Right ventricle myocardium inferior (tissue), 1 donor: ENCODE measurements at regions of chr9 and their contacts with region 1.

Region 1: GRCh38 chr9:131432597-131433306 is 38.9 kb downstream of the PRRC2B start:
- DNase-seq: no peak
- ATAC-seq: peak; percentile 15

Region 2: GRCh38 chr9:131393622-131394463 is 38.9 kb before region 1 on chr9 and contains the start of gene PRRC2B:
- intact Hi-C with region 1: loop called (anchors 5 kb)
- DNase-seq: peak; percentile 94
- ATAC-seq: peak; percentile 85
- total RNA-seq, gene PRRC2B: 142 TPM

Region 3: DNA sequence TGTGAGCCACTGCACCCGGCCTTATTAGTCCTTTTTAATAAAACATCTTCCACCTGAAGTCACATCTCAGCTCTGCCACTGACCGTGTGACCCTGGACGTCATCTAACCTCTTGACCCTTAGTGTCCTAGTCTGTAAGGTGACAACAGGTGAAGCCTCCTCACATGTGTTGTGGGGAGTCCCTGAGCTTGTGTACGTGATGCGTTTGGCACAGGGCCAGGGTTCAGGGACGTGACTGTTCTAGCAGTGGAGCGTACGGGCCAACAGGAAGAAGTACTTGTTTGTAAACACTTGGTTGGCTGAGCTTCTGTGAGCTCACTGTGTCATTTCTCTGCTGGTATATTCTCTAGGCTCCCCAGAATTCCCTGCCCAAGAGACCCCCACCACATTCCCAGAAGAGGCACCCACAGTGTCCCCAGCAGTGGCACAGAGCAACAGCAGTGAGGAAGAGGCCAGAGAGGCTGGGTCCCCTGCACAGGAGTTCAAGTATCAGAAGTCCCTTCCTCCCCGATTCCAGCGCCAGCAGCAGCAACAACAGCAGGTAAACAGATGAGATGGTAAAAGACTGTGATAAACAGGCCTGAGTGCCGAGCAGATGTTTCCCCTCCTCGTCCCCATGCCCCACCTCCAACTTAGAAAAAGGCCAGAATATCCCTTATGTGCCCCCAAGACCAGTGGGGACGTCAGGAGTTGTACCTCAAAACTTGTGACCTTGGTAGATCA is 34.6 kb after region 1 on chr9:
- intact Hi-C with region 1: loop called (anchors 5 kb)
- DNase-seq: no peak
- ATAC-seq: no peak